PC-3 (cell line): ENCODE measurements at regions of chr1 and their contacts with region 1.

Region 1: GRCh38 chr1:187038789-187039188 is 210.0 kb downstream of the PLA2G4A start:
- DNase-seq: peak; percentile 77
- ATAC-seq: peak; percentile 87
- H3K4me3 ChIP-seq: no peak overlapping the region
- H3K27ac ChIP-seq: peak overlapping the region; percentile 66
- H3K4me1 ChIP-seq: peaks cover 24% of the 10 kb centered on the region
- H3K27me3 ChIP-seq: no peaks in the 10 kb centered on the region
- CTCF ChIP-seq: no peak

Region 2: DNA sequence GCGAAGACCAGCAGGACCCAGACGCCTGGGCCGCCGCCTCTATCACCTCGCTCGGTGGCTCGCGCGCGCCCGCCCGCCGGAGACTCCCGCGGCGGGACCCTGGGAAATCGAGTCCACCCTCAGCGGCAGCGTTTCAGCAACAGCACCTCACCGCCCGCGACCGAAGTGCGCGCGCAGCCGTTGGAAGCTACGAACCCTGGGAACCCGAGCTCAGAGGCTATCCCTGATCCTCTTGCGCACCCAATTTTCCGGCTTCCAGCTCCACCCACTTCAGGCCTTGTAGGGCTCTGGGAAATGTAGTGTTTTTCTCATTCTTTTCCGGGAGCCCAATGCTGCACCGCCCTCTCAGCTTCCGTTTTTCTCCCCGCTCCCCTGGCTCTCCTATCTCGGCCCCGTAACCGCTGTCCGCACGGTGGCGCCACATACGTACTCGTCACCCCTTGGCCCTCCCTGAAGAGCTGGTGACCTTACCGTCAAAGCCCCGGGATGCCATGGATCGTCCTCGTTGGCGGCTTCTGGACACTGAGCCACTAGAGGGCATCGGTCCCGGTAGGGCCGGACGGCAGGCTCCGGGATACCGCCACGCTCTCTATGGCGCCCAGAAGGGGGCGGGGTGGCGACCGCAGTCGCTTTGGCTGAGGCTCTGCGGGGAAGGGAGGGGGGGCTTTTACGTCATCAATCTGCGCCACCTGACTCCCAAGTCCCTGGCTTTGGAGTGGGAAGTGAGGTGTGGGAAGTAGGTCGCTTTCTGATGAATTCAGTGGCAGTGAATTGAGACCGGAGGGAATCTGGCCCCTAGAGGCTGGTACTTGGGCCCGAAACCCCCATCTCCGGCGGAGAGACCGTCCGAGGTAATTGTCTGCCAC is 663.5 kb before region 1 on chr1 and contains the starts of genes ODR4 and TPR:
- CTCF ChIA-PET with region 1: no interaction called
- POLR2A ChIA-PET with region 1: no interaction called
- intact Hi-C with region 1: no loop called
- DNase-seq: peak; percentile 96
- ATAC-seq: peak; percentile 90
- H3K4me3 ChIP-seq: peak within 1 kb of the TSS; percentile 97
- H3K27ac ChIP-seq: peak within 1 kb of the TSS; percentile 90
- H3K4me1 ChIP-seq: peaks cover 15% of the 10 kb centered on the region
- H3K27me3 ChIP-seq: no peaks in the 10 kb centered on the region
- CTCF ChIP-seq: peak; percentile 92
- total RNA-seq, gene ODR4: 7.9 and 14.9 TPM in 2 replicates
- total RNA-seq, gene TPR: 39.3 and 48.0 TPM in 2 replicates

Region 3: DNA sequence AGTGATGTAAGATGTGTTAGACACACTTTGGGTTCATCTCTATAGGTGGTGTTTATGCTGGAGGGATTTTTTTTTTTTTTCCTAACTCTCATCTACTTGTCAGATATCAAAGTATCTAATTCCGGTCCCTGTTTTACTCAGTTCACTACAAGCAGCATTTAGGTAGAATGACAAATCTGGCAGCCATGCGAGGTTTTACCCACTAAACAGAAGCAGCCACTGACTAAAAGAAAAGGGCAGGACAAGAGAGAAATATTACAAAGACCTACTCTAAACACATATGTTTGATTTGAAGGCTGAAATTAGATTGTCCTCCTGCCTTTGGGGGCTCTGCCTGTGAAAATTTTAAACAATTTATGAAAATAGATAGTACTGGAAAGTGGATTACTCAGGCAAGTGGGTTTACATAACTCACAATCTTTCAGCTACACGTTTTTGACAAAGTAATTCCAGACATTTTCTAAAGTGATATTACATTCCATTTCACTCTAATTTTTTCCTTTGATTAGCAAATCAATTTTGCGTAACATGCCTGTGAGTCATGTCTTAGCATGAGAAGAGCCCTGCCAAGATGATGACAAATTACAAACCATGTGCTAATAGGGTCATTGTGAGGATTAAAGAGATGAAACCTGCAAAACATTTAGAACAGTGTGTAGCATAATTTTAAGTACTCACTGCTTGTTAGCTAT is 37.4 kb before region 1 on chr1:
- CTCF ChIA-PET with region 1: no interaction called
- POLR2A ChIA-PET with region 1: no interaction called
- intact Hi-C with region 1: loop called (anchors 5 kb)
- DNase-seq: peak; percentile 61
- ATAC-seq: no peak
- H3K4me3 ChIP-seq: no peak overlapping the region
- H3K27ac ChIP-seq: peak overlapping the region; percentile 62
- H3K4me1 ChIP-seq: peaks cover 11% of the 10 kb centered on the region; the same call in 1 of the 2 replicates
- H3K27me3 ChIP-seq: no peaks in the 10 kb centered on the region
- CTCF ChIP-seq: no peak

Region 4: GRCh38 chr1:187091666-187092065 is 52.9 kb after region 1 on chr1:
- CTCF ChIA-PET with region 1: no interaction called
- POLR2A ChIA-PET with region 1: no interaction called
- intact Hi-C with region 1: no loop called
- DNase-seq: peak; percentile 57
- ATAC-seq: peak; percentile 57; the same call in 1 of the 2 replicates
- H3K4me3 ChIP-seq: no peak overlapping the region
- H3K27ac ChIP-seq: no peak overlapping the region
- H3K4me1 ChIP-seq: peaks cover 7% of the 10 kb centered on the region
- H3K27me3 ChIP-seq: no peaks in the 10 kb centered on the region
- CTCF ChIP-seq: no peak